Adrenal gland (tissue), 19 donors: ENCODE measurements at regions of chrX and their contacts with region 1.

Region 1: GRCh38 chrX:110450050-110450449 is 91.4 kb downstream of the RTL9 start:
- DNase-seq: peak; percentile 71 to 90 (median 80)
- H3K4me3 ChIP-seq: no peak overlapping the region
- H3K27ac ChIP-seq: no peak overlapping the region
- H3K4me1 ChIP-seq: no peaks in the 10 kb centered on the region
- H3K27me3 ChIP-seq: peaks cover 51% of the 10 kb centered on the region
- CTCF ChIP-seq: peak; percentile 55 to 81 (median 64)
- POLR2A ChIP-seq: no peak

Region 2: DNA sequence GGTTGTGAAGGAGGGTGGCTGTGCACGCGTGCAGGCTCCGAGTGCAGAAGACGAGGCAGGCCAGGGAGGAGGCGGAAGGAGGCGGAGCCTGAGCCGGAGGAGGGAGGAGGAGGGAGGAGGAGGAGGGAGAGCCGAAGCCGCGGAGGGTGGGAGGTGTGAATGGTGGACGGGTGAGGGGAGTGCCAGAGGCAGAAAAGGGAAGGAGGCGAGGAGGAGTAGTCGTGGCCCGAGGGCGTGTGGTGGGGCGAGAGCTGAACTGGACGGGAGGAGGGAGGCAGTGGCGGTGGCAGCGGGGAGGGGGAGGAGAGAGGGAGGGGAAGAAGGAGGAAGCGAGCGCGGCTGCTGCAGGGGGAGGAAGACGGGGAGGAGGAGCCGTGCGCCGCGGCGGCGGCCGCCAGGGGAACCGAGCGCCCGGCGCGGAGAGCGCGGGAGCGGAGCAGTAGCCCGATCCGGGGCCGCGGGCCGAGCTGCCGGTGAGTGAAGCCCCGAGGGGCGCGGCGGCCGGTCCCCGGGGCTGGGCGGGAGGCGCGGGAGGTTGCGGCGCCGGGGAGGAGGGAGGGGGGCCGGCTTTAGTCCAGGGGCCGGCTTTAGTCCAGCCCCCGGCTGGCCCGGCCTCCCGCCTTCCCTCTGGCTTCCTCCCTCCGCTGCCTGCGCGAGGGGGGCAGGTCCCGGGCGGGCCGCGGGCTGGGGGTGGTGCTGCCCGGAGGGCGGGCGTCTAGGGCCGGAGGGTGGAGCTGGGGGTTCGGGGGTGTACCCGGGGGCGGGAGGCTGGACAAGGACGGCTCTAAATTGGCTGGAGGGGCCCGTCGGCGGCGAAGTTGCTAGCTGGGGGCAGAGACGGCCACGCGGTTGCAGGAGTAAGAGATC is 447.5 kb before region 1 on chrX and contains the start of gene TMEM164:
- intact Hi-C with region 1: no loop called
- DNase-seq: peak; percentile 78 to 89 (median 86)
- H3K4me3 ChIP-seq: peak within 1 kb of the TSS; percentile 8 to 82 (median 40)
- H3K27ac ChIP-seq: peak within 1 kb of the TSS in 4 of 5 donors; percentile 78 to 98 (median 86)
- H3K4me1 ChIP-seq: peaks cover 13 to 24% of the 10 kb centered on the region in 2 donors
- H3K27me3 ChIP-seq: peaks cover 4% of the 10 kb centered on the region
- CTCF ChIP-seq: peak in 3 of 6 experiments; percentile 17 to 43 (median 21)
- POLR2A ChIP-seq: peak; percentile 23 to 25
- total RNA-seq, gene TMEM164: 17.2 to 32.2 (median 26.4) TPM

Region 3: DNA sequence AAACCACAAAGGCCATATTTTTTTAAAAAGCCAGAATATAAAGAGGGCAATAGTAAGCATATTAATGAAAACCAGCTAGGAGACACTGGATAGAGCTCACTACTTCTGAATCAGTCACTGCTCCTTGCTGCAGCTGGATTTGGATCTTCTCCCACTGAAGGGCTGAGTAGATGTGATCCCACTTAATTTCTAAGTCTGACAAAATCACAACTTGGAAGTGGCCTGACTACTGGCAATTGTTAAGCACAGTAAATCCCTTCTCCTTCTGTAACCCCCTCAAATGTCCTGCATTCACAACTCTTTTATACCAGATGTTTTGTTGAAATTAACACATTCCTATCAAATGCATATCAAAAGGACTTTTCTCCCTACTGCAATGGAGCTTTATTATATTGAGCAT is 205.0 kb before region 1 on chrX:
- intact Hi-C with region 1: no loop called
- DNase-seq: no peak
- H3K4me3 ChIP-seq: no peak overlapping the region
- H3K27ac ChIP-seq: no peak overlapping the region
- H3K4me1 ChIP-seq: no peaks in the 10 kb centered on the region
- H3K27me3 ChIP-seq: no peaks in the 10 kb centered on the region
- CTCF ChIP-seq: no peak
- POLR2A ChIP-seq: no peak

Region 4: GRCh38 chrX:110847334-110847733 is 397.3 kb after region 1 on chrX:
- intact Hi-C with region 1: loop called (anchors 2 to 10 kb)
- DNase-seq: peak in 1 of 7 donors; percentile 37
- H3K4me3 ChIP-seq: no peak overlapping the region
- H3K27ac ChIP-seq: no peak overlapping the region
- H3K4me1 ChIP-seq: no peaks in the 10 kb centered on the region
- H3K27me3 ChIP-seq: peaks cover 20% of the 10 kb centered on the region
- CTCF ChIP-seq: peak; percentile 42 to 72 (median 52)
- POLR2A ChIP-seq: no peak